Lower leg skin (tissue), 4 donors: ENCODE measurements at regions of chr2 and their contacts with region 1.

Region 1: GRCh38 chr2:120343433-120344105 is 2.4 kb upstream of the INHBB start:
- DNase-seq: peak; percentile 84 to 97
- H3K4me3 ChIP-seq: no peak overlapping the region
- CTCF ChIP-seq: no peak
- POLR2A ChIP-seq: no peak

Region 2: DNA sequence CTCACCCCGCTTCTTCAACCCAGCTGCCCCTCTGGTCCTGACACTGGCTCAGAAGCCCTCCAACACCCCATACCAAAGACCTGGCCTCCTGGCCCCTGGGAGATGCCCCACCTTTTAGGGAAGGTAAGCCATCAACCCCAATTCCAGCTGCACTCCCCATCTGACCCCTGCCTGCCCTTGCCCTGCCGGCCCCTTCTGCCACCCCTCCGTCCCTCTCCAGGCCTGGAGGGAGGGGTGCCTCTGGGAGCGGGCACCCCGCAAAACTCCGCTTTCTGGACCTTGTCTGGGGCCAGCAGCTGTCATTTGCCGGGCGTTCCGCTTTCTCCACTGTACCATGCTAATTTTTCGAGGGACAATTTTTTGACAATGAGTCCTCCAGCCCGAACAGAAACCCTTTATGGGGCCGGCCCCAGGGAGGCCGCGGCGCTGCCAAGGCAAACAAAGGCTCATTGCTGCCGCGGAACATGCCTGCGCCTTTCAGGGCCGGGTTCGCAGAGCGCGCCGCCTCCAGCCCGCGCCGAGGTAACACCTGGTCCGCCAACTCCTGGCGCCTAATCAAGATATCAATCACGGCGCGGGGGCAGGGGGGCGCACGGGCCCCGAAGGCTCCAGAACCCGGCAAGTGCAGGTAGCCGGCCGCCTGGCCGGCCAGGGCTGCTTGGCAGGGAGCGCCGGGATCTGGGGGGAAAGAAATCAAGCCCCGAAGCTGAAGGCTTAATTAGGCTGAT is 98.3 kb after region 1 on chr2:
- intact Hi-C with region 1: loop called (anchors 10 kb)
- DNase-seq: peak in 1 of 2 donors; percentile 88
- H3K4me3 ChIP-seq: no peak overlapping the region
- CTCF ChIP-seq: no peak
- POLR2A ChIP-seq: no peak

Region 3: DNA sequence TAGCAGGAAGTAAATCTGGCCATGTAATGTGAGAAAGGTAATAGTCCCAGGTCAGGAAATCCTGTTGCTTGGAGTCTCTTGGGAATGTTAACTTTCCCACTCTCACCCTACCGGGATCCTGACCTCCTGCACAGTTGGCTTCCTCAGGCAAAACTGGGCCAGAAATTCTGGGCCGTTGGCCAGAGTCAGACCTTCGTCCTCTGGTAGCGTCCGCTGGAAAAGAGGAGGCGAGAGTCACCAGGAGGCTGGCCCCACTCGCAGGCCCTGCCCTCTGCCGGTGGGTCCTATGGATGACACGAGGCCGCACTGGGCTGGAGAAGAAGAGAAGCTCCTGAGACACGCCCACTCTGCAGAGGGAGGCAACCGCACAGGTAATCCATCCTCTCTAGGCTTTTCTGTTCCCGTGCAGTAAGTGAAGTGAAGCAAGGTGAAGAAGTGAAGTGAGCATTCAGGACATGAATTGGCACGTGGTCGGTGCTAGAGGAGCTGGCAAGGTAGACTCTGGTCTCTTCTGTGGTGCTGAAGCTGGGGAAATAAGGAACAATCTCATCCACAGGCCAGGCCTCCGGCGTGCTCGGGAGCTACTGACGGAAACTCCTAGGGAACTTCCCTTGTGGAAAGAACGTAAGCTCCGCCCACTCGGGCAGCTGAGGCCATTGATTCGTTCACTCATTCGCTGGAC is 209.4 kb after region 1 on chr2:
- intact Hi-C with region 1: loop called (anchors 10 kb)
- DNase-seq: peak; percentile 75 to 95
- H3K4me3 ChIP-seq: no peak overlapping the region
- CTCF ChIP-seq: no peak
- POLR2A ChIP-seq: no peak

Region 4: GRCh38 chr2:120680136-120680761 is 336.7 kb after region 1 on chr2:
- intact Hi-C with region 1: loop called (anchors 1 kb)
- DNase-seq: peak; percentile 84 to 97
- H3K4me3 ChIP-seq: no peak overlapping the region
- CTCF ChIP-seq: peak in 1 of 3 donors; percentile 84
- POLR2A ChIP-seq: no peak